Heart left ventricle (tissue), 16 donors: ENCODE measurements at regions of chr20 and their contacts with region 1.

Region 1: DNA sequence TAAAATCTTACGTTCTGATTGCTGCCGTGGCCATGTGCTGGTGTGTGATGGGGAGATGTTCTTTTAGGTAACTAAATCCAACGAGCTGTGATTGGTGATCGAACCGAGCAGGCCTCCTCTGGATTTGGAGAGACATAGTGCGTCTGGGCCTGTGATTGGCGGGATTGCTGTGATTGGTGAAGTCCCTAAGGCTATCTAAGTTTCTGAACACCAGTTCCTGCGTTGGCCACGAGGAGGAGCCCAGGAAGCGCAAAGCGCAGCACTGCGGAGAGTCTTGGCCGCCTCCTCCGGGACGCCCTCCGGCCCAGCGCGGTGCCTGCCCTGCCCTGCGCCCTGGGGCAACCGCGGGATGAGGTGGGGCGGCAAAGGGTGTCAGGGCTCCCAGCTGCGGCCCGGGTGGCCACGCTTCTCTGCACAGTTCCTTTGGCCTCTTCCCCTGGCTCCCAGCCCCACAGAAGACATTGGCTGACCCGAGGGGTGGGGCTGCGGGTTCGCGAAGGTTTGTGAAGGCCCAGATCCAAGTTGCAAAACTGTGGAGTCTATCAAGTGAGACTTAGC is 33.0 kb downstream of the HNF4A start:
- DNase-seq: peak; percentile 23 to 77 (median 70)
- ATAC-seq: peak; percentile 23 to 82 (median 69)
- H3K4me3 ChIP-seq: no peak overlapping the region
- H3K27ac ChIP-seq: no peak overlapping the region
- H3K4me1 ChIP-seq: peaks cover 0 to 6% (median 0%) of the 10 kb centered on the region in 12 donors
- H3K27me3 ChIP-seq: peaks cover 0 to 11% (median 0%) of the 10 kb centered on the region in 9 donors
- CTCF ChIP-seq: peak; percentile 52 to 73 (median 62)
- POLR2A ChIP-seq: no peak

Region 2: DNA sequence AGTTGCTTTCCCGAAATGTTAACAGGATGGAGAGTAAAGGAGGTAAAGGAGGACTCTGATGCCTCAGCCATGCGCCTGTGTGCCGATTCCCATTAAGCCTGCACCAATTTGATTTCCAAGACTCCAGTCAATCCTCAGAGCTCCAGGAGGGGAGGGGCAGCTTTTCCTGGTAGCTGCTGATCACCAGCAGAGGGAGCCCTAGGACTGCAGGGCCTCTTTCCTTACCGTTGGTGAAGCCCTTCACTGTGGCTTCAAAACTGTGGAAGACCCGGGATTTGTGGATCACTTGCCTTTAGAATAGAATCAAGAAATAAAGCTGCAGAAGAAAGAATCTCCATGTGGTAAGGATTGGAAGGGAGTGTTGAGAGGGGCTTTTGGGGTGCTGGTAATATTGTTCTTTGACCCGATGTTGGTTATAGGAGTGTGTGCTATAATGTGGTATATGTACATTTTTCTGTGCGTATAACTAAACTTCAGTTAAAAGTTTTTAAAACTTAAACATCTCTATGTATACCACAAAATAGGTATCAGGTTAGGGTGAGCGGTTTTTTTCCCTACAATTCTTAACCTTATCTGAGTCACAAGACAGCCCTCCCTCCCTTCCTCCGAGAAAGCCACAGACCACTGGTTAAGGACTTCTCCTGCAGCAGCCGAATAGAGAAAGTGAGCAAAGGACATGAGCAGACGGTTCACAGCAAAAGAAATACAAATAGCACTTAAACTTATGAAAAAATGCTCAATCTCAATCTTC is 171.0 kb before region 1 on chr20:
- intact Hi-C with region 1: loop called (anchors 1 to 5 kb)
- DNase-seq: peak; percentile 64 to 84 (median 69)
- ATAC-seq: peak in 3 of 4 donors; percentile 76 to 81 (median 78)
- H3K4me3 ChIP-seq: peak overlapping the region in 11 of 12 donors; percentile 3 to 46 (median 33)
- H3K27ac ChIP-seq: peak overlapping the region in 10 of 12 donors; percentile 12 to 72 (median 41)
- H3K4me1 ChIP-seq: peaks cover 0 to 21% (median 11%) of the 10 kb centered on the region in 12 donors
- H3K27me3 ChIP-seq: no peaks in the 10 kb centered on the region
- CTCF ChIP-seq: peak; percentile 76 to 92 (median 86)
- POLR2A ChIP-seq: no peak

Region 3: DNA sequence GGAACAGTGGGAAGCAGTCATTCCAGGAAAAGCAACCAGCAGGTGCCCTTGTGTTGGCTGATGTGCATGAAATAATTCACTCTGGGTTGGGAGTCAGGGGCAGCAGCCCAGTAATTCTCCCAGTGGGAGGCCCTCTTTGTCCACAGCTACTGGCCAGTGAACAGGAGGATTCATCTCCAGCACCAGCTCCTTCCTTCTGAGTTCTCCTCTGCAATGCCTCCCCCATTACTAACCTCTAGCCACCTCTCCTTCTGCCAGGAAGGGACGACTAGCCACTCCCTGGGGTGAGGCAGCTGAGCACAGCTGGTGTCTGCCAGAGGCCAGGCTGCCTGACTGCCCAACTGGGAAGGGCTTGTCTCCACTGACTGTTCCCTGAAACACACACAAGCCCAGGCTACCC is 64.2 kb before region 1 on chr20:
- intact Hi-C with region 1: loop called in 3 of 10 experiments (anchors 5 to 10 kb)
- DNase-seq: no peak
- ATAC-seq: peak in 1 of 4 donors; percentile 48
- H3K4me3 ChIP-seq: no peak overlapping the region
- H3K27ac ChIP-seq: no peak overlapping the region
- H3K4me1 ChIP-seq: peaks cover 0 to 7% (median 0%) of the 10 kb centered on the region in 12 donors
- H3K27me3 ChIP-seq: peaks cover 0 to 16% (median 0%) of the 10 kb centered on the region in 9 donors
- CTCF ChIP-seq: no peak
- POLR2A ChIP-seq: no peak

Region 4: DNA sequence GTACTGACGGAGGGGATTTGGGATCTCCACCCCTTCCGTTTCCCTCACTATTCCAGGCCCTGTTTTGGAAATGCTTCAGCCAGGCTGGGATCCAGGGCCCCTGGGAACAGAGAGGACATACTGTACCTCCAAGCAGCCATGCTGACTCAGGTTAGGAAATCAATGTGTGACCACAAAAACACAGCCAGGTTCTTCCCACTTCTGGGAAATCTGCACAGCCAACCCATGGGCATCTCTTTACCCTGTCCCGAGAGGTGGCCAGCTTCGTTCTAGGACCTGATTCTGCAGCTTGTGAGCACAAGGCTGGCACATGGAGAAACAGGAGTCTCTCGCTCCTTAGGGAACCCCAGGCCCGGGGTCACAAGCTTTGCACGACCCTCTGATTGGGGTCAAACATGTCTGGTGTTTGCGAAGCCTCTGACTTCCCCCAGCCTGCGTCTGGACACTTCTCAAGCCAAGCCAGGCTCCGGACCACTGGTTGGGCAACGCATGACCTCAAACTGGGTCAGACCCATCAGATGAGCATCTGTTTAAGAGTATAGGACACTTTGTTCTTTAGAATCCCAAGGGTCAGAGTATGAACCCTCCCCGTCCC is 78.8 kb after region 1 on chr20:
- intact Hi-C with region 1: loop called in 6 of 10 experiments (anchors 5 to 10 kb)
- DNase-seq: peak in 1 of 5 donors; percentile 66
- ATAC-seq: peak; percentile 48 to 77 (median 68)
- H3K4me3 ChIP-seq: no peak overlapping the region
- H3K27ac ChIP-seq: peak overlapping the region in 1 of 12 donors; percentile 31
- H3K4me1 ChIP-seq: peaks cover 0 to 5% (median 0%) of the 10 kb centered on the region in 12 donors
- H3K27me3 ChIP-seq: no peaks in the 10 kb centered on the region
- CTCF ChIP-seq: no peak
- POLR2A ChIP-seq: no peak

Region 5: GRCh38 chr20:44609511-44610312 is 221.2 kb after region 1 on chr20:
- intact Hi-C with region 1: loop called in 9 of 10 experiments (anchors 1 to 10 kb)
- DNase-seq: peak; percentile 88 to 93 (median 89)
- ATAC-seq: peak; percentile 85 to 92 (median 91)
- H3K4me3 ChIP-seq: peak overlapping the region in 9 of 12 donors; percentile 11 to 41 (median 32)
- H3K27ac ChIP-seq: peak overlapping the region; percentile 45 to 91 (median 84)
- H3K4me1 ChIP-seq: peaks cover 8 to 70% (median 40%) of the 10 kb centered on the region in 12 donors
- H3K27me3 ChIP-seq: no peaks in the 10 kb centered on the region
- CTCF ChIP-seq: peak; percentile 92 to 100 (median 98)
- POLR2A ChIP-seq: no peak

Region 6: GRCh38 chr20:44733341-44734069 is 345.0 kb after region 1 on chr20:
- intact Hi-C with region 1: loop called in 4 of 10 experiments (anchors 5 to 10 kb)
- DNase-seq: peak in 4 of 5 donors; percentile 56 to 69 (median 64)
- ATAC-seq: peak; percentile 39 to 59 (median 48)
- H3K4me3 ChIP-seq: no peak overlapping the region
- H3K27ac ChIP-seq: no peak overlapping the region
- H3K4me1 ChIP-seq: peaks cover 0 to 37% (median 11%) of the 10 kb centered on the region in 12 donors
- H3K27me3 ChIP-seq: no peaks in the 10 kb centered on the region
- CTCF ChIP-seq: peak; percentile 81 to 97 (median 92)
- POLR2A ChIP-seq: no peak